PC-9 (cell line): ENCODE measurements at regions of chr17 and their contacts with region 1.

Region 1: GRCh38 chr17:74833501-74834377 is 25.9 kb downstream of the GRIN2C start:
- DNase-seq: peak in 1 of 2 experiments; percentile 53
- H3K4me3 ChIP-seq: no peak overlapping the region
- H3K27ac ChIP-seq: no peak overlapping the region
- H3K4me1 ChIP-seq: no peaks in the 10 kb centered on the region
- H3K27me3 ChIP-seq: no peaks in the 10 kb centered on the region
- CTCF ChIP-seq: no peak

Region 2: DNA sequence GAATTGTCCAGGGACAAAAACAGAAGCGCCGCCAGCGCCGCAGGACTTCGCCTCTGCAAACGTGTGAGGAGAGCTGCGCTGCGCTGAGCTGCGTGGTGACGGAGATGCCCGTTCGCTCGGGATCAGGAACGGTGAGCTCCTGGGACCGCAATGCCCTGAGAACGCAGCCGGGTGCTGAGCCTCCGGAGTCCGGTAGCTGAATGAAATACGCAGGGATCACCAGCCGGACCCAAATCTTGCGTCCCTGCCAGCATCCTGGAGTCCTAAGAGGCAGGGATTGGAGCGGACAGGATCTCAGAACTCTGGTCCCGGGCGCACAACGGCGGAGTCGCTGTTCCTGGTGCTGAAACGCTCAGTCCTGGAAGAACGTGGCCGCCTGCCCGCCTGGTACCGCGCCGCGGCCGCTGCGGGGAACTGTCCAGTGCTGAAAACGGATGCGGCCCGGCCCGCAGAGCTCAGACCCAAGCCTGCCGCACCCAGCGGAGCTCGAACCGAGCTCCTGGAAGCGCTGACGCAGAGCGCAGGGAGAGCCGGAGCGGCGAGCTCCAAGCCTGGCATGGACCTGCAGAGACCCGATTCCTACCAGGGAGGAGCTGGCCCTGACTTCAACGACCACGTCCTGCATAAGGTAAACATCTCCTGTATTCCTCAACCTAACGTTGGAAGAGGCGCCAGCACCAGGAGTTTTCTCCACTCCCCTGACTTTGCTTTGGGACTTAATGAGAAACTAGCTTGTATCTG is 162.5 kb before region 1 on chr17:
- CTCF ChIA-PET with region 1: no interaction called
- POLR2A ChIA-PET with region 1: interaction called, 14 read pairs
- intact Hi-C with region 1: no loop called
- DNase-seq: no peak
- H3K4me3 ChIP-seq: no peak overlapping the region
- H3K27ac ChIP-seq: no peak overlapping the region
- H3K4me1 ChIP-seq: no peaks in the 10 kb centered on the region
- H3K27me3 ChIP-seq: peaks cover 91% of the 10 kb centered on the region
- CTCF ChIP-seq: no peak